Activated naive CD4-positive, alpha-beta T cell treated with anti-CD3 and anti-CD28 coated beads for 36 hours (primary cell): ENCODE measurements at regions of chr1 and their contacts with region 1.

Region 1: GRCh38 chr1:9004700-9005394 is 21.4 kb downstream of the SLC2A7 start:
- DNase-seq: peak; percentile 94
- H3K4me3 Mint-ChIP-seq: peak overlapping the region; percentile 24
- H3K27ac Mint-ChIP-seq: no peak overlapping the region
- H3K4me1 Mint-ChIP-seq: peaks cover 8% of the 10 kb centered on the region
- H3K27me3 Mint-ChIP-seq: no peaks in the 10 kb centered on the region

Region 2: DNA sequence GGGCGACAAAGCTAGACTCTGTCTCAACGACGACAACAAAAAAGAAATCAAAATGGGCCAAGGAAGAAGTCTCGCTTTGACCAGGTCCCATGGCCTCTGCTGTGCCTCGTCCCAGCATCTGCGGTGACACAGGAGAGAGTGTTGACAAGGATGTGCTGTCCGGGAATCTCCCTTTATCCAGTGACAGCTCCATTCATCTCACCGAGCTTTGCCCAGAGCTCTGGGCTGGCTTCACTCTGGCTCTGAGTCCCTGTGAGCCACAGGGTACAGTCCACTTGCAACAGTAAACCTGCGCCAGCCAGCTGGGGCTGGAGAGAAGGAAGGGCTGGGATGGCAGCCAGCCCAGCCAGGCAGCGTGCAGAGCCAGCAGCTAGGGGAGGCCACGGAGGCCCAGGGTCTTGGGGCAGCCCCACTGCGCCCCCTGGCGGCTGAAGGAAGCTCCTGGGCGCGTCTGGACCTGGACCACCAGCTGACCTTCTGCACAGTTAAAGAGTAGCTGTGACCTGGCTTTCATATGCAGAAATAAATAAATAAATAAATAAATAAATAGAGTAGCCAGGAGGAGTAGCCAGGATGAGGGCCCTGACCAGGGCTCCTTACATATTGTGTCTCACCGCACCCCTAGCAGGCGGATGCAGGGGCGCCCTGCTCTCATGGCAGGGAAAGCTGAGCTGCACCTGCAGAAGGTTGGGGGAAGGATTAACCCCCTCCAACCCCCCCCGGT is 156.0 kb before region 1 on chr1:
- CTCF ChIA-PET with region 1: interaction called, 13 read pairs
- intact Hi-C with region 1: no loop called
- DNase-seq: peak; percentile 82
- H3K4me3 Mint-ChIP-seq: no peak overlapping the region
- H3K27ac Mint-ChIP-seq: no peak overlapping the region
- H3K4me1 Mint-ChIP-seq: peaks cover 4% of the 10 kb centered on the region
- H3K27me3 Mint-ChIP-seq: no peaks in the 10 kb centered on the region

Region 3: DNA sequence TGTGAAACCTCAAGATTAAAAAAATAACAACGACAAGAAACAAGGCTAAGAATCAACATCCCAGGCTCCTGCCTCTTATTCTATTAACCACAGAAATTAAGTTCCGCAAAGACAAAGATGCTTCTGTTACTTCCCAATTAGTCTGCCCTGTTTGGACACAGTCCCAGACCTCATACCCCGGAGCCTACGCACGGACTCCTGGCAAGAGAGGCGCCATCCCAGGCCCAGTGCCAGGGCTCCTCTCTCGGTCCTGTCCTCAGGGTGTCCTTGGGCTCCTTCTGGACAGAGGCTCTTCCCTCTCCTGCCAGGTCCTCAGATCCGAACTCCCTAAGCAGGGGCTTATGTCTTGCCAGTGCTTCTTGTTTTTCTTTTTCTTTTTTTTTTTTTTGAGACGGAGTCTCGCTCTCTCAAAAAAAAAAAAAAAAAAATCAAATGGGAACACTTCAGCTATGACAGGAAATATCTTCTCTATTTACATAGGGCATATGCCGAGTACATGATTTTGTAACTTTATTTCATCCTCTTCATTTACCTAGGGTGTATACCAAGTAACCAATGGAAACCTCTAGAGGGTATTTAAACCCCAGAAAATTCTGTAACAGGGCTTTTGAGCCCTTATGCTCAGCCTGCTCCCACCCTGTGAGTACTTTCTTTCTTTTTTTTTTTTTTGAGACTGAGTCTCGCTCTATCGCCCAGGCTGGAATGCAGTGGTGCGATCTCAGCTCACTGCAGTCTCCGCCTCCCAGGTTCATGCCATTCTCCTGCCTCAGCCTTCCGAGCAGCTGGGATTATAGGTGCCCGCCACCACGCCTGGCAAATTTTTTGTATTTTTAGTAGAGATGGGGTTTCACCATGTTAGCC is 114.7 kb before region 1 on chr1:
- CTCF ChIA-PET with region 1: no interaction called
- intact Hi-C with region 1: no loop called
- DNase-seq: no peak
- H3K4me3 Mint-ChIP-seq: no peak overlapping the region
- H3K27ac Mint-ChIP-seq: no peak overlapping the region
- H3K4me1 Mint-ChIP-seq: peaks cover 7% of the 10 kb centered on the region
- H3K27me3 Mint-ChIP-seq: no peaks in the 10 kb centered on the region

Region 4: DNA sequence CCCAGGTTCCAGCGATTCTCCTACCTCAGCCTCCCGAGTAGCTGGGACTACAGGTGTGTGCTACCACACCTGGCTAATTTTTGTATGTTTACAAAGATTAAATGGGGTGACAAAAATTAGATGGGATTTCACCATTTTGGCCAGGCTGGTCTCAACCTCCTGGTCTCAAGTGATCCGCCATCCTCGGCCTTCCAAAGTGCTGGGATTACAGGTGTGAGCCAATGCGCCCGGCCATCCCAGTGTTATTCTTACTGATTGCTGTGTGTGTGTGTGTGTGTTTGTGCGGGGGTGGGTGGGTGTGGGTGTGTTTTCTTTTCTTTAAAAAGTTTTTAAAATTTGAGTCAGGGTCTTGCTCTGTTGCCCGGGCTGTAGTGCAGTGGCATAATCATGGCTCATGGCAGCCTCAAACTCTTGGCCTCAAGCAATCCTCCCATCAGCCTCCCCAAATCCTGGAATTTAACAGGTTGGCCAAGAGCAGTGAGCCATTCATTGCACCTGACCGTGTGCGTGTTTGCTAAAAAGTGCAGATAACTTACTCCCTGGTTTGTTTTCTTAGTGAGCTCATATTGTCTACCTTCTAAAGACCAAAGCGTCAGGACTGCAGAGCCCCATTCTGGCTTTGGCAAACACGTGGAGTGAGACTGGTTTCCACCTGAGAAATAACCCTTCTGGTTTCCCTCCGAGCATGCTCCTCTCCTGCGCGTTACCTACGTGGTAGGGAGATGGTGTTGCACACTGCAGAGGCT is 91.6 kb before region 1 on chr1:
- CTCF ChIA-PET with region 1: interaction called, 117 read pairs
- intact Hi-C with region 1: loop called (anchors 1 kb)
- DNase-seq: no peak
- H3K4me3 Mint-ChIP-seq: no peak overlapping the region
- H3K27ac Mint-ChIP-seq: no peak overlapping the region
- H3K4me1 Mint-ChIP-seq: peaks cover 6% of the 10 kb centered on the region
- H3K27me3 Mint-ChIP-seq: no peaks in the 10 kb centered on the region

Region 5: GRCh38 chr1:8970870-8971337 is 33.9 kb before region 1 on chr1:
- CTCF ChIA-PET with region 1: interaction called, 23 read pairs
- intact Hi-C with region 1: loop called (anchors 2 kb)
- DNase-seq: peak; percentile 81
- H3K4me3 Mint-ChIP-seq: peak overlapping the region; percentile 96
- H3K27ac Mint-ChIP-seq: peak overlapping the region; percentile 94
- H3K4me1 Mint-ChIP-seq: peaks cover 35% of the 10 kb centered on the region
- H3K27me3 Mint-ChIP-seq: no peaks in the 10 kb centered on the region

Region 6: GRCh38 chr1:9101510-9102146 is 96.8 kb after region 1 on chr1:
- CTCF ChIA-PET with region 1: interaction called, 9 read pairs
- intact Hi-C with region 1: loop called (anchors 5 kb)
- DNase-seq: peak; percentile 62
- H3K4me3 Mint-ChIP-seq: no peak overlapping the region
- H3K27ac Mint-ChIP-seq: no peak overlapping the region
- H3K4me1 Mint-ChIP-seq: no peaks in the 10 kb centered on the region
- H3K27me3 Mint-ChIP-seq: no peaks in the 10 kb centered on the region

Region 7: GRCh38 chr1:9792156-9793042 is 787.6 kb after region 1 on chr1:
- CTCF ChIA-PET with region 1: no interaction called
- intact Hi-C with region 1: no loop called
- DNase-seq: no peak
- H3K4me3 Mint-ChIP-seq: no peak overlapping the region
- H3K27ac Mint-ChIP-seq: no peak overlapping the region
- H3K4me1 Mint-ChIP-seq: peaks cover 35% of the 10 kb centered on the region
- H3K27me3 Mint-ChIP-seq: no peaks in the 10 kb centered on the region